Activated B cell treated with CpG ODN at 0.5 μM for 24 hours (primary cell): ENCODE measurements at regions of chr4 and their contacts with region 1.

Region 1: GRCh38 chr4:6716018-6716911 is at the start of gene BLOC1S4:
- DNase-seq: peak; percentile 87
- ATAC-seq: peak; percentile 85
- H3K4me3 Mint-ChIP-seq: peak within 1 kb of the TSS; percentile 91
- H3K27ac Mint-ChIP-seq: peak within 1 kb of the TSS; percentile 96
- H3K4me1 Mint-ChIP-seq: peaks cover 39% of the 10 kb centered on the region
- H3K27me3 Mint-ChIP-seq: peaks cover 3% of the 10 kb centered on the region
- CTCF ChIP-seq: no peak
- total RNA-seq, gene BLOC1S4: 19.8 and 20.3 TPM in 2 replicates

Region 2: GRCh38 chr4:6269616-6270511 is 446.4 kb before region 1 on chr4 and contains the start of gene WFS1:
- CTCF ChIA-PET with region 1: no interaction called
- POLR2A ChIA-PET with region 1: no interaction called
- intact Hi-C with region 1: loop called (anchors 5 kb)
- DNase-seq: peak; percentile 97
- ATAC-seq: peak; percentile 99
- H3K4me3 Mint-ChIP-seq: peak within 1 kb of the TSS; percentile 86
- H3K27ac Mint-ChIP-seq: peak within 1 kb of the TSS; percentile 63
- H3K4me1 Mint-ChIP-seq: peaks cover 29% of the 10 kb centered on the region
- H3K27me3 Mint-ChIP-seq: no peaks in the 10 kb centered on the region
- CTCF ChIP-seq: no peak
- total RNA-seq, gene WFS1: 2.4 and 4.3 TPM in 2 replicates

Region 3: DNA sequence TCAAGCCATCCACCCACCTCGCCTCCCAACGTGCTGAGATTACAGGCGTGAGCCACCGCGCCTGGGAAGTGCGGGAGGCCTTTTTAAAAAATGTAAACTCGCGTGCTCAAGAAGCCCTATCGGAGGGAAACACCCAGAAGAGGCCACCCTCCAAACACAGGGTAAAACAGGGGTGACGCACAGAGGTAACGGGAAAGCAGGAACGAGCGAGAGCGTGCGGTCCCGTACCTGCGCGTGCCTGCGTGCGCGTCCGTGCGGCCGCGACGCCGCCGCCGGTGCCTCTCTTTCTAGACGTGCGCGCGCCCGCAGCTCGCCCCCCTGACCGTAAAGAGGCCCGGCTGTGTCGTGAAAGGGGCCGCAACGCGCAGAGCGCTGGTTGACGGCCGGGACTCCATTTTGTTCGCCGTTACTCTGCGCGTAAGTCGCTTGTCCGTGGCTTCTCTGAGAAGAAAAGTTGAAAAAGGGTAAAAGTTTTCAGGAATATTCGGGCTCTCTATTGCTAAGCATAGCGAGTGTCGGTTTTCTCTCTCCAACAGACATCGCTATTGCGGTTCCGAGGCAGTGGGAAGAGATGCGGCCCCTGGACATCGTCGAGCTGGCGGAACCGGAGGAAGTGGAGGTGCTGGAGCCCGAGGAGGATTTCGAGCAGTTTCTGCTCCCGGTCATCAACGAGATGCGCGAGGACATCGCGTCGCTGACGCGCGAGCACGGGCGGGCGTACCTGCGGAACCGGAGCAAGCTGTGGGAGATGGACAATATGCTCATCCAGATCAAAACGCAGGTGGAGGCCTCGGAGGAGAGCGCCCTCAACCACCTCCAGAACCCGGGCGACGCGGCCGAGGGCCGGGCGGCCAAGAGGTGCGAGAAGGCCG is 75.7 kb before region 1 on chr4 and contains the start of gene MRFAP1:
- CTCF ChIA-PET with region 1: no interaction called
- POLR2A ChIA-PET with region 1: interaction called, 52 read pairs
- intact Hi-C with region 1: loop called (anchors 1 kb)
- DNase-seq: peak; percentile 91
- ATAC-seq: peak; percentile 84
- H3K4me3 Mint-ChIP-seq: peak within 1 kb of the TSS; percentile 99
- H3K27ac Mint-ChIP-seq: peak within 1 kb of the TSS; percentile 100
- H3K4me1 Mint-ChIP-seq: peaks cover 36% of the 10 kb centered on the region
- H3K27me3 Mint-ChIP-seq: no peaks in the 10 kb centered on the region
- CTCF ChIP-seq: no peak
- total RNA-seq, gene MRFAP1: 93.8 and 93.9 TPM in 2 replicates

Region 4: DNA sequence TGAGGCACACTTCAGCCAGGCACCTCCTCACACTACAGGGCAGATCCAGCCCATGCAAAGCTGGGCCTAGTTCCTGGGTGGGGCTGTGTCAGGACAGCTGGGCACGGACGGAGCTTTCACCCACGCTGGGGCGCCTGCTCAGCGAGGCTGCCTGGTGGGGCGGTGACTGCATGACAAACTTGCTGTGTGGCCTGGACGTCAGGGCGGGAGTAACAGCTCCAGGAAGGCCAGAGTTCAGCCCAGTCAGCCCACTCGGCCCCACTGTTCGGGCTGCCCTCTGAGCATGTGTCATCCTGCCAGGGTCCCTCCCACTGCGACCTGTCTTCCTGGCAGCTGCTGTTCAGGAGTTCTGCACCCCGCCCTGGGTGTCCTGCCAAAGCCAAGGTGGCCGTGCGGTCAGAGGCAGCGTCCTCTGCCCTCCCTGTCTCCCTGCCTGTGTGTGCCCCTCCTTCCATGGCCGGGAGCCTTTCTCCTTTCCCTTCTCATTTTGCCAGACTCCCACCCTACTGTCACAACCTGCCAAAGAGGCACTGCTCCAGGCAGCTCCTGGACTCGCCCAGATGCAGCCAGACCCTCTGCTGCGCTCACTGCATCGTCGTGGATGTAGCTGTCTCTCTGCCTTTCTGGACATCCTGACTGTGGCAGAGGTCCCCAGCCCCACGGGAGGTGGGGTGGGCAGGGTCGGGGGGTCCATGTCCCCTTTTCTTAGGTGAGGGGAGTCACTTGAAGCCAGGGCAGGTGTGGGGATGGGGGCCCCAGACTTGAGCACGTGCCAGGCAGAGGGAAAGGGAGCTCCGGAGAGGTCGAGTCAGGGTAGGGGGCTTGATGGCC is 33.3 kb after region 1 on chr4:
- CTCF ChIA-PET with region 1: no interaction called
- POLR2A ChIA-PET with region 1: no interaction called
- intact Hi-C with region 1: no loop called
- DNase-seq: no peak
- ATAC-seq: no peak
- H3K4me3 Mint-ChIP-seq: no peak overlapping the region
- H3K27ac Mint-ChIP-seq: no peak overlapping the region
- H3K4me1 Mint-ChIP-seq: no peaks in the 10 kb centered on the region
- H3K27me3 Mint-ChIP-seq: peaks cover 4% of the 10 kb centered on the region
- CTCF ChIP-seq: no peak

Region 5: DNA sequence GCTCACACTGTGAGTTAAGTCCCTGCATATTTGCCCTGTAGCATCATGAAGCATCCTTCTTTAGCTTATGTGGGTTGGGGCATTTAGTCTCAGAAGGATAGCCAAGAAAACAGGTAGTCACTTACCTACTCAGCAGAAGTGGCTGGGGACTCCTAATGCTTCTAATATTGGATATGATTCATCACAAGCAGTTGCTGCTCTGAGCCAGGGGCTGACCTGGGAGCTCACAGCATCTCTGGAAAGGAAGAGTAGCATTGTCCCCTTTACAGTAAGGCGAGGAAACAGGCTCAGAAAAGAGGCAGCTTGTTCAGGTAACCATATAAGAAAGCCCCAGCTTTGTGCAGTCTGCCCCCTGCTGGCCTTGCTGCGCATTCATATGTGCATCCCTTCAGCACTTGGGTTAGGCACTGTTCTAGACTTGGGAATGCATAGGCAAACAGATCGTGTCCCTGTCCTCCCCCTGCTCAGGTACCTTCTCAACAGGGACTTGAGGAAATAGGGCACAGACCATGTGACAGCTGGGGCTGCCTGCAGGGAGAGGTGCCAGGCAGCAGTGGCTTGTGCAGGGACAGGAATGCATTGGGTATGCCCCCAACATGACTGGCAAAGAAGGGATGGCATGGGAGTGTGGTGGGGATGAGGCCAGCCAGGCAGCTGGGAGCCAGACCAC is 157.7 kb after region 1 on chr4:
- CTCF ChIA-PET with region 1: interaction called, 117 read pairs
- POLR2A ChIA-PET with region 1: interaction called, 6 read pairs
- intact Hi-C with region 1: loop called (anchors 1 kb)
- DNase-seq: peak; percentile 50
- ATAC-seq: peak; percentile 74
- H3K4me3 Mint-ChIP-seq: no peak overlapping the region
- H3K27ac Mint-ChIP-seq: no peak overlapping the region
- H3K4me1 Mint-ChIP-seq: peaks cover 12% of the 10 kb centered on the region
- H3K27me3 Mint-ChIP-seq: no peaks in the 10 kb centered on the region
- CTCF ChIP-seq: no peak

Region 6: GRCh38 chr4:6986781-6987587 is 270.7 kb after region 1 on chr4:
- CTCF ChIA-PET with region 1: interaction called, 3 read pairs
- POLR2A ChIA-PET with region 1: interaction called, 3 read pairs
- intact Hi-C with region 1: loop called (anchors 1 kb)
- DNase-seq: peak; percentile 90
- ATAC-seq: peak; percentile 92
- H3K4me3 Mint-ChIP-seq: peak overlapping the region; percentile 94
- H3K27ac Mint-ChIP-seq: peak overlapping the region; percentile 98
- H3K4me1 Mint-ChIP-seq: peaks cover 74% of the 10 kb centered on the region
- H3K27me3 Mint-ChIP-seq: no peaks in the 10 kb centered on the region
- CTCF ChIP-seq: no peak

Region 7: DNA sequence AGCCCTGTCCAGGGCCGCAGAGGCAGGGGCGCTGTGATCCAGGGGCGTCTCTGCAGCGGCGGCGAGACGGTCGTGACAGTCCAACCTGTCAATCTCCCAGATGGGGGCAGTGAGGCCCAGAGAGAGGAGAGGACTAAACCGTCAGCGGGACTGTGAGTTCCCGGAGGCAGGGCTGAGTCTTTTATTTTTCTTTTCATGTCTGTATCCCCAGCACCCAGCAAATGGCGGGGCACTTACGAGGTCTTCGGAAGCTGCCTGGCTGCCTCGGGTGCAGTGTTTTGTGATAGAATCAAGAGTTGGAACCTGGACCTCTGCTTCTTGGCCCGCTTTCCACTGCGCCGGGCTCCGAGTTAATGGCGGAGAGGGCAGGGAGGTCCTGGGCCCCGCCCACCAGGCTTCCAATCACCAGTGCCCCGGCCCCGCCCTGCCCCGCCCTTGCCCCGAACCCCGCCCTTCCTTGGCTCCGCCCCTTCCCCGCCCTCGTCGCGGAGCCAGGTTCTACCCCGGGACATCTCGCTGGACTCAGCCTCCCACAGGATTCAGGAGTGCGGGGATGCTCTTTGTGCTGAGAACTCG is 386.9 kb after region 1 on chr4:
- CTCF ChIA-PET with region 1: no interaction called
- POLR2A ChIA-PET with region 1: no interaction called
- intact Hi-C with region 1: loop called (anchors 1 kb)
- DNase-seq: peak; percentile 65
- ATAC-seq: peak; percentile 96
- H3K4me3 Mint-ChIP-seq: peak overlapping the region; percentile 91
- H3K27ac Mint-ChIP-seq: peak overlapping the region; percentile 46
- H3K4me1 Mint-ChIP-seq: peaks cover 20% of the 10 kb centered on the region
- H3K27me3 Mint-ChIP-seq: peaks cover under 1% of the 10 kb centered on the region
- CTCF ChIP-seq: no peak